BJ (cell line): ENCODE measurements at regions of chr11 and their contacts with region 1.

Region 1: DNA sequence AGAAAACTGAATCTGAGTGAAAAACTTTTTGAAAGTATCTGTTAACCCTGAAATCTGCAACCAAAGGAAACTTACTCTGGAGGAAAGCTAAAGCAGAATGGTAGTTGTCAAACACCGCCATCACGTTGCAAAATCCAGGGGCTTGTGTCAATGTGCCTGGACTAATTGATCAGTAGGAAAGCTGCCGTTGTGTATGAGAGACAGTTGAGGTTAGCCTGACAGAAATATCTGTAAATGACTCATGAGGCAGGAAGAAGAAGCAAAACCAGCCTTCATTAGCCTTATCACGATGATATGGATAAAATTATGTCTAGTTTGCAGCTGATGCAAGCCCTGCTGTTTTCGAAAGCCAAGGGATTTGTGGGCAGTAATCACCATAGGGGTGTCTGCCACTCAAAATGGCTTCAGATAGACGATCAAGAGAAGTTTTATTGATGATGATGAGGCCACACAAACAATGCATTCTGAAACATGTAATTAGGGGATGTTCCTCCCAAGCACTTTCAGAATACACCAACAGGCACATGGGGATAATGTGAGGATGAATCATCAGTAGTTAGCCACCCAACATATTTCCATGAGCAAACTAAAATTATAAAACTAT is 8.9 kb downstream of the SCGB1A1 start:
- DNase-seq: no peak
- H3K4me3 ChIP-seq: no peak overlapping the region
- H3K27me3 ChIP-seq: no peaks in the 10 kb centered on the region
- CTCF ChIP-seq: no peak

Region 2: DNA sequence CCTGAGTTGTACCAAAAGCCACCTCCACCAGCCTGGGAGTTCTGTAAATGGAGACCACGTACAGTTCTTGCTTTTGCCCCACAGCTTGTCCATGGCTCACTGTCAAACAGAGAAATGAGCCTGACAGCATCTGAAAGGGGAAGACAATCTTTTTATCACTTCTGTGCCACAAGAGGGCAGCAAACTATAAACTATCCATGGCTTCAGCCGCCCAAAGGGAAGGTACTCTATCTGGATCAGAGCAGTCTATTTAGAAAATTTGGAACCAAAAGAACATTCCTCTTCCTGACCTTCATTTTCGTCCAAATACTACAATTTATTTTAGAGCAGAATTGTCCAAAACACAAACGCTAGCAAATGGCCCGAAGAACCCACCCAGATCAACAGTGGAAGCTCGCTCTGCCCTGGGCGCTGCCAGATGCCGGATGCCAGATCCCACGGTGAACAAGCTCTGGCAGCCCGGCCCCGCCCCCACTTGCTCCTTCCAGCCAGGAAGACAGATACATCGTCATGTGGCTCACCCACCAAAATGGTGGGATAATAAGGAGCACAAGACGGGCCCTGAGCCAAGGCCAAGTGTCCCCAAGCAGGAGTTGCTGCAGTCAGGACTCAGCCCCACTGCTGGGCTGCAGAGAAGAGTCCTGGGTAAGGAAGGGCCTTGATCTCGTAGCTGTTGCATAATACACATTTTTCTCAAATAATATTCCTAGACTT is 32.8 kb before region 1 on chr11:
- CTCF ChIA-PET with region 1: interaction called, 44 read pairs
- POLR2A ChIA-PET with region 1: no interaction called
- DNase-seq: peak; percentile 41
- H3K4me3 ChIP-seq: peak overlapping the region; percentile 13; the same call in 1 of the 2 replicates
- H3K27me3 ChIP-seq: peaks cover 6% of the 10 kb centered on the region
- CTCF ChIP-seq: peak; percentile 56

Region 3: DNA sequence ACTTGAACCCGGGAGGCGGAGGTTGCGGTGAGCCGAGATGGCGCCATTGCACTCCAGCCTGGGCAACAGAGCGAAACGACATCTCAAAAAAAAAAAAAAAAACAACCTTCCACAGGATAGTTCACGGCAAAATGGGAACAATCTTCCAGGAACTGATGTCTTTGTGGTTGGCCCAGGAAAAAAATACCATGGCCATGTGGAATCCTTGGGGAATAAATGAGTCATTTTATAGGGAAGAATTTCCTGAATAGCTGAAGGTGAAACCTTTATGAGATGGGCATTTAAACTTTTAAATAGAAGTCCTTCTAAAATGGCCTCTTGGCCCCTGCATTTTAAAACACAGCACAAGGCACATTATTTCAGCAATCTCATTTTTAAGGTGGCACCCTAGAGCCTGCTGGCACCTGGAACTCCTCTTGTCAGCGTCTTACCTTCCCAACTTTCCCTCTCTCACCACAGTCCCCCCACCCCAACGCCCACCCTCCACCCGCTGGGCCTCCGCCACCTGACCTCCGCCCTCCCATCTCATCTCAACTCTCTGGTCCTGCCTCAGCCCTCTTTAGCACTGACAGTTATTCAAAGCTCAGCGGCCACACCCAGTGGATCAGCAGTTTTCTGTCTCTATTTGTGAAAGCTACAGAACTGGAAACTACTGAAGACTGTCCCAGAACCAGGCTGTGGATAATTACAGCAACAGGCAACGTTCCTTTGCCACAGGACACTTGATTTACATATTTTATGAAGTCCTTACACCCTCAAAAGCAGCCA is 34.2 kb after region 1 on chr11:
- CTCF ChIA-PET with region 1: interaction called, 12 read pairs
- POLR2A ChIA-PET with region 1: no interaction called
- DNase-seq: peak; percentile 86
- H3K4me3 ChIP-seq: no peak overlapping the region
- H3K27me3 ChIP-seq: no peaks in the 10 kb centered on the region
- CTCF ChIP-seq: no peak

Region 4: GRCh38 chr11:62508268-62509058 is 80.7 kb after region 1 on chr11:
- CTCF ChIA-PET with region 1: interaction called, 25 read pairs
- POLR2A ChIA-PET with region 1: no interaction called
- DNase-seq: no peak
- H3K4me3 ChIP-seq: peak overlapping the region; percentile 5; the same call in 1 of the 2 replicates
- H3K27me3 ChIP-seq: no peaks in the 10 kb centered on the region
- CTCF ChIP-seq: peak; percentile 79

Region 5: GRCh38 chr11:62556108-62556871 is 128.6 kb after region 1 on chr11:
- CTCF ChIA-PET with region 1: interaction called, 66 read pairs
- POLR2A ChIA-PET with region 1: interaction called, 4 read pairs
- DNase-seq: peak; percentile 81
- H3K4me3 ChIP-seq: 0 out of 2 replicates have a peak overlapping the region, but pooled peaks have one; percentile 10
- H3K27me3 ChIP-seq: no peaks in the 10 kb centered on the region
- CTCF ChIP-seq: no peak

Region 6: GRCh38 chr11:62591448-62592145 is 163.9 kb after region 1 on chr11 and contains the start of gene TUT1:
- CTCF ChIA-PET with region 1: interaction called, 10 read pairs
- POLR2A ChIA-PET with region 1: no interaction called
- DNase-seq: peak; percentile 96
- H3K4me3 ChIP-seq: peak within 1 kb of the TSS; percentile 51
- H3K27me3 ChIP-seq: no peaks in the 10 kb centered on the region
- CTCF ChIP-seq: no peak
- polyA plus RNA-seq, gene TUT1: 6.4 and 9.9 TPM in 2 replicates